Mucosa of descending colon (tissue), 3 donors: ENCODE measurements at regions of chr16 and their contacts with region 1.

Region 1: DNA sequence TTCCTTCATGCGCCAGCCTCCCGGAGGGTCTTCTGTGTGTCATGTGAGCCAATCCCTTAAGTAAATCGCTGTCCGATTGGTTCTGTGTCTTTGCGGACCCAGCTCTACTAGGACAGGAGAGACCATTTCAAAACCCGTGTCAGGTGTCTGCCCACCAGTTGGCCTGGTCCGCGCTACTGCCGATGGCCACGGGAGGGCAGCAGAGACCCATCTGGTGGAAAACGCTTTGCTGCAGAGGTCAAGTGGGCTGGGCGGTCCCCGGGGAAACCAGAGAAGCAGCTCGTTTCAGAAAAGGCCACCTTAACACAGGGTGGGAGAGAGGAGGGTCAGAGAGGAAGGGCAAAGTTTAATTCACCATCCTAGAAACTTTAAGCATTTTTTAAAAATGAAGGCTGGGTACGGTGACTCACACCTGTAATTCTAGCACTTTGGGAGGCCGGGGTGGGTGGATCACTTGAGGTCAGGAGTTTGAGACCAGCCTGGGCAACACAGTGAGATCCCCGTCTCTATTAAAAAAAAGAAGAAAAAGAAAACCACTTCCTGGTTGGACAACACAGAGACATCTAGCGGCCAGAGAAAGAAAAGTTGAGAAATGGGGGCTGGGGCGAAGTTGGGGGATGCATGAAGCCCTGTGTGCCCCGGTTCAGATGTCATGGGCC is 2.8 kb upstream of the CIBAR2 start:
- DNase-seq: peak; percentile 85 to 95 (median 94)
- ATAC-seq: peak; percentile 96
- H3K4me3 ChIP-seq: no peak overlapping the region
- H3K4me1 ChIP-seq: no peaks in the 10 kb centered on the region
- CTCF ChIP-seq: peak; percentile 91

Region 2: DNA sequence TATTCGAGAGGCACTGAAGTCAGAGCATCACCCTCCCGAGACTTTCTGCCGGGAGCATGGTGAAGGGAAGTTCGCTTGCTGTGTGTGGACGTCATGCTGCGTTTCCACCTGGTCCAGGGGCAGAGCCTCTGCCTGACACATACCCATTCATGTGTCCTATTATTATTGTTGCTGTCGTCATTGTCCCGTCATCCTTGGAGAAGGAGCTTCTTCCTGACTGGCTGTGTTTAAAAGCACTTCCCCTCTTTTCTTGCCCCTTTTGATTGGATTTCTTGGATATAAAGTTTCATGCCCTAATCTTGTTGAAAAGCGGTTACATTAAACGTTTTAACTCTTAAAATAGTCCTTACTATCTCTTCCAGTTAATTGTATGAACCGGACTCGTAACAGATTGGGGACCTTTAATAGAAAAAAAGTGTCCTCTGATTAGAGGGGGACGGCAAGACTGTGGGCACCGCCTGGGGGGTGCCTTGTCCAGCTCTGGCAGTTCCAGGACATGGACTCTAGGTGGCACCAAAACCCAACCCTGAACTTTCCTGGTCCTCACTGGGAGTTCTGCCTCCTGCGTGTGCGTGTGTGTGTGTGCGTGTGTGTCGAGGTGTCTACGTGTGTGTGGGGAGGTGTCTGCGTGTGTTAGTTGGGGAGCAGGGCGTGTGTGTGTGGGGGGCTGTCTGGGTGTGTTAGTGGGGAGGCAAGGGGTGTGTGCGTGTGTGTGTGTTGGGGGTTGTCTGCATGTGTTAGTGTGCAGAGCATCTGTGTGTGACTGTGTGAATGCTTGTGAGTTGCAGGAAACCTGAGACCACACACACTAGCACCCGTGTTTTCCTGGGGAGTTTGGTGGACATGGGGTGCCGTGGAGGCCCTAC is 130.5 kb after region 1 on chr16:
- intact Hi-C with region 1: loop called in 1 of 2 experiments (anchors 10 kb)
- DNase-seq: peak in 2 of 3 donors; percentile 52 to 63
- ATAC-seq: peak; percentile 74
- H3K4me3 ChIP-seq: no peak overlapping the region
- H3K4me1 ChIP-seq: no peaks in the 10 kb centered on the region
- CTCF ChIP-seq: peak; percentile 34

Region 3: DNA sequence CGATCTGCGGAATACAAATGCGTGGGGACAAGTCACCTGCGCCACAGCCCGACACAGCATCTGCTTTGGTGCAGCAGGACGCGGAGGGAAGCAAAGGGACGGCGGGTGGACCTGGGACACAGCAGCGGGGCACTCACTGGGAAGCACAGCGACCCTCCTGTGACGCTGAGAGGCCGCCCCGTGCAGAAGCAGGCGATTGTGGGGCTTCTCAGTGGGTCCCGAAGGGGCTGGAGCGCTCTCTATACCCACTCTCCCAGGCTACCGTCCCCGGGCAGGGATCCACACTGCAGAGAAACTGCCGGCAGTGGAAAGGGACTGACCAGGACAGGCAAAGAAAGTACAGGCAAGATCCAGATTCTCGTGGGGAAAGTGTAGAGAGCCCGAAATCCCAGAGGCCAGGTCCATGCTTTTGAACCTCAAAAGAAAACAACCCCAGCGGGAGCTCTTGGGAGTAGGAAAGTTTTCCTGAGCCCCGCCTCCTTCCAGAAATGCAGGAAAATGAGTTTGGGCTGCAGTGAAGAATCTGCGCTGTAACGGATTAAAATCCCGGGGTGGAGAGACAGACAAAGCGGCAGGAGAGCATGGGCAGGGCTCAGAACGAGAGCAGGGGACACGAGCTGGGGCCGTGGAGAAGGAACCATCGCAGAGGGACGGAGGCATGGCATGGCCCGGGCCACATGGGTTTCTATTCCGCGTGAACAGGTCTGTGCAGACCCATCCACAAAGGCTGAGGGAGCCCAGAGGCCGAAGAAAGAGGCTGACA is 697.2 kb after region 1 on chr16:
- intact Hi-C with region 1: no loop called
- DNase-seq: no peak
- ATAC-seq: peak; percentile 15
- H3K4me3 ChIP-seq: no peak overlapping the region
- H3K4me1 ChIP-seq: no peaks in the 10 kb centered on the region
- CTCF ChIP-seq: no peak